ENCODE measurements at regions of chr7 and their contacts with region 1.

Region 1: DNA sequence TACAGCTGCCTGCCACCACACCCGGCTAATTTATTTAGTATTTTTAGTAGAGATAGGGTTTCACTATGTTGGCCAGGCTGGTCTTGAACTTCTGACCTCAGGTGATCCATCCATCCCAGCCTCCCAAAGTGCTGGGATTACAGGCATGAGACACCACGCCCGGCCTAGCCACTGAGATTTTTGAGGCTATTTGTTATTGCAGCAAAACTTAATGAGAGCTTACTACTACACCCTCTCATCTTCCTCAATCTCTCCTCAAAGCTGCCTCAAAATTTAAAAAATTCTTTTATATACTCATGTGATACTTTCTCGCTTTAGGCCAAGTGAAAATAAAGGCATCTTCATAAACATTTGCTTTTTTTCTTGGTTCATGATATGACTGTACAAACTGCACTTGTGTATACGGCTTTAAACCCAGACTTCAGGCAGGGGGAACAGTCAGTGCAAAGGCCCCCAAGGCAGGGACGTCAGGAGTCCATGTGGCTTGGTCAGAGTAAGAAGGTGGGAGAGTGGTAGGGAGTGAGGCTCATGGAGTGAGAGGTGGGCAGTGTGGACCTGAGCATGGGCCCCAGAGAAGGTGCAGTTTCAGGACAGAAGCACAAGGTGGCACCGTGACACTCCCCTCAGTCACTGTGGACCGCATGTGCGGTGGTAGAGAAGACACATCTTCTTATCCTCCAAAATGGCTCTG is 55.5 kb downstream of the SYPL1 start:
- DNase-seq: peak; percentile 60
- ATAC-seq: peak; percentile 97
- H3K4me3 ChIP-seq: no peak overlapping the region
- H3K27ac ChIP-seq: no peak overlapping the region
- H3K4me1 ChIP-seq: peaks cover 12% of the 10 kb centered on the region
- H3K27me3 ChIP-seq: peaks cover 2% of the 10 kb centered on the region; the same call in 1 of the 2 replicates
- CTCF ChIP-seq: peak; percentile 90

Region 2: DNA sequence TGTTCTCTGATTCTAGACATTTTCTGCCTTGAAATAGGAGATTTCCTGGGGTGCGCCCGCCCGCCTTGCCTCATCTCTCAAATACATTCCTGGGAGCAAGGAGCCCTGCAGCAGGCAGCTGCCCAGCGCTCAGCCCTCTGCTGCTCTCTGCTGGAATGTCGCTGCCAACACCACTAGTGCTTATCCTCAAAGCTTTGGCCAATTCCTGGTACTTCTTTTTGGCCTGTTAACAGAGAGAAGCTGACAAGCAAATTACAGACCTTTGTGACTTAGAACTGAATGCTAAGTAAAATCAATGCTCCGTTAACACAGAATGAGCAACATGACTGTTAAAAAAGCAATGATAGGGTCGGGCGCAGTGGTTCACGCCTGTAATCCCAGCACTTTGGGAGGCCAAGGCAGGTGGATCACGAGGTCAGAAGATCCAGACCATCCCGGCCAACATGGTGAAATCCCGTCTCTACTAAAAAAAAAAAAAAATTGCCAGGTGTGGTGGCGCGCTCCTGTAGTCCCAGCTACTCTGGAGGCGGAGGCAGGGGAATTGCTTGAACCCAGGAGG is 97.3 kb after region 1 on chr7:
- CTCF ChIA-PET with region 1: interaction called, 21 read pairs
- POLR2A ChIA-PET with region 1: no interaction called
- in situ Hi-C with region 1: loop called (anchors 25 kb)
- intact Hi-C with region 1: loop called (anchors 1 kb)
- DNase-seq: peak; percentile 64
- ATAC-seq: peak; percentile 99
- H3K4me3 ChIP-seq: no peak overlapping the region
- H3K27ac ChIP-seq: no peak overlapping the region
- H3K4me1 ChIP-seq: no peaks in the 10 kb centered on the region
- H3K27me3 ChIP-seq: no peaks in the 10 kb centered on the region
- CTCF ChIP-seq: peak; percentile 97

Region 3: GRCh38 chr7:106190589-106191330 is 134.1 kb after region 1 on chr7:
- CTCF ChIA-PET with region 1: no interaction called
- POLR2A ChIA-PET with region 1: no interaction called
- in situ Hi-C with region 1: no loop called
- intact Hi-C with region 1: no loop called
- DNase-seq: no peak
- ATAC-seq: no peak
- H3K4me3 ChIP-seq: no peak overlapping the region
- H3K27ac ChIP-seq: no peak overlapping the region
- H3K4me1 ChIP-seq: no peaks in the 10 kb centered on the region
- H3K27me3 ChIP-seq: no peaks in the 10 kb centered on the region
- CTCF ChIP-seq: no peak